WTC11 (cell line): ENCODE measurements at regions of chr14 and their contacts with region 1.

Region 1: DNA sequence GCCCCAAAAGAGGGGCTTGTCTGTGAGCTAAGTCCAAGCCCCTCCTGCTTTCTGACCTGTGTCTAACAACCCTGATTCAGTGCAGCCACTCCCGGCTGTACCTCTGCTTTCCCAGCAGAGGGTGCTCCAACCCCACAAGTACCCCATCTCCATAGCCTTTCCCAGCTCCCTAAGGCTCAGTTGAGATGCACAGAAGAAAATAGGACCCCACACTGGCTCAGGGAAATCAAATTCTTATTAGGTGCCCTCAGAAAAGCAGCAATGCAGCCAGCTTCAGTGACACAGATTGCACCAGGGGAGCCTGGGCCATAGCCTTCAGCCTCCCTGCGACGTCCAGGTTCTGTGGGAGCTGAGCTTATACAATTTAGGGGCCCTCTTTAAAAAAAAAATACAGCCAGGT is 49.9 kb downstream of the LRRC74A start:
- DNase-seq: peak; percentile 76
- ATAC-seq: peak; percentile 95
- H3K4me3 Mint-ChIP-seq: no peak overlapping the region
- H3K27ac Mint-ChIP-seq: no peak overlapping the region
- H3K4me1 Mint-ChIP-seq: peaks cover 5% of the 10 kb centered on the region
- H3K27me3 Mint-ChIP-seq: peaks cover 4% of the 10 kb centered on the region; the same call in 1 of the 2 replicates
- CTCF ChIP-seq: peak; percentile 86

Region 2: GRCh38 chr14:76584271-76584702 is 291.8 kb before region 1 on chr14:
- CTCF ChIA-PET with region 1: no interaction called
- POLR2A ChIA-PET with region 1: no interaction called
- DNase-seq: no peak
- ATAC-seq: no peak
- H3K4me3 Mint-ChIP-seq: no peak overlapping the region
- H3K27ac Mint-ChIP-seq: peak overlapping the region; percentile 25; the same call in 1 of the 2 replicates
- H3K4me1 Mint-ChIP-seq: no peaks in the 10 kb centered on the region
- H3K27me3 Mint-ChIP-seq: no peaks in the 10 kb centered on the region
- CTCF ChIP-seq: no peak

Region 3: DNA sequence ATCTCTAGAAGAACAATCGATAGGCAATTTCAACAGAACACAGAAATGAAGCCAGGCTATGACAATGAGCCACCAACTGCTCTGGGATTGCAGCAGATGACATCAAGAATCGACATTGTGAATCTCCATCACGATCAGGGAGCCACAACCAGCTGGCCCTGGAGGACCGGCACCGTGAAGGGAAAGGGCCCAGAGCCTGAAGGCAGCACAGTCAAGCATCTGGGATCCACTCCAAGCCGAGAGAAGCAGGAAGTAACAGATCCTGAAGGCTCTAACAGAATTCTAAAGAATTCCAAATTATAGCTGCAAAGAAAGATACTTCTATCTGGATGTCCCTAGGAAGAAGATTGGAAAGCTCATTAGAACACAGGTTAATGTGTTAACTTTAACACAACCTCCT is 11.1 kb after region 1 on chr14:
- CTCF ChIA-PET with region 1: interaction called, 22 read pairs
- POLR2A ChIA-PET with region 1: no interaction called
- DNase-seq: no peak
- ATAC-seq: no peak
- H3K4me3 Mint-ChIP-seq: no peak overlapping the region
- H3K27ac Mint-ChIP-seq: no peak overlapping the region
- H3K4me1 Mint-ChIP-seq: peaks cover 20% of the 10 kb centered on the region
- H3K27me3 Mint-ChIP-seq: no peaks in the 10 kb centered on the region; the same call in 1 of the 2 replicates
- CTCF ChIP-seq: no peak

Region 4: GRCh38 chr14:76918751-76919543 is 42.9 kb after region 1 on chr14:
- CTCF ChIA-PET with region 1: interaction called, 196 read pairs
- POLR2A ChIA-PET with region 1: no interaction called
- DNase-seq: peak; percentile 53
- ATAC-seq: peak; percentile 33
- H3K4me3 Mint-ChIP-seq: no peak overlapping the region; the same call in 1 of the 2 replicates
- H3K27ac Mint-ChIP-seq: peak overlapping the region; percentile 85
- H3K4me1 Mint-ChIP-seq: peaks cover 81% of the 10 kb centered on the region
- H3K27me3 Mint-ChIP-seq: no peaks in the 10 kb centered on the region
- CTCF ChIP-seq: no peak

Region 5: GRCh38 chr14:76977793-76978720 is 102.0 kb after region 1 on chr14:
- CTCF ChIA-PET with region 1: no interaction called
- POLR2A ChIA-PET with region 1: no interaction called
- DNase-seq: no peak
- ATAC-seq: peak; percentile 31
- H3K4me3 Mint-ChIP-seq: no peak overlapping the region
- H3K27ac Mint-ChIP-seq: no peak overlapping the region
- H3K4me1 Mint-ChIP-seq: peaks cover 19% of the 10 kb centered on the region
- H3K27me3 Mint-ChIP-seq: no peaks in the 10 kb centered on the region
- CTCF ChIP-seq: no peak

Region 6: GRCh38 chr14:77023001-77023996 is 147.2 kb after region 1 on chr14:
- CTCF ChIA-PET with region 1: interaction called, 13 read pairs
- POLR2A ChIA-PET with region 1: no interaction called
- DNase-seq: peak; percentile 44
- ATAC-seq: peak; percentile 40
- H3K4me3 Mint-ChIP-seq: peak overlapping the region; percentile 49
- H3K27ac Mint-ChIP-seq: peak overlapping the region; percentile 99
- H3K4me1 Mint-ChIP-seq: peaks cover 32% of the 10 kb centered on the region
- H3K27me3 Mint-ChIP-seq: peaks cover 2% of the 10 kb centered on the region; the same call in 1 of the 2 replicates
- CTCF ChIP-seq: no peak

Region 7: DNA sequence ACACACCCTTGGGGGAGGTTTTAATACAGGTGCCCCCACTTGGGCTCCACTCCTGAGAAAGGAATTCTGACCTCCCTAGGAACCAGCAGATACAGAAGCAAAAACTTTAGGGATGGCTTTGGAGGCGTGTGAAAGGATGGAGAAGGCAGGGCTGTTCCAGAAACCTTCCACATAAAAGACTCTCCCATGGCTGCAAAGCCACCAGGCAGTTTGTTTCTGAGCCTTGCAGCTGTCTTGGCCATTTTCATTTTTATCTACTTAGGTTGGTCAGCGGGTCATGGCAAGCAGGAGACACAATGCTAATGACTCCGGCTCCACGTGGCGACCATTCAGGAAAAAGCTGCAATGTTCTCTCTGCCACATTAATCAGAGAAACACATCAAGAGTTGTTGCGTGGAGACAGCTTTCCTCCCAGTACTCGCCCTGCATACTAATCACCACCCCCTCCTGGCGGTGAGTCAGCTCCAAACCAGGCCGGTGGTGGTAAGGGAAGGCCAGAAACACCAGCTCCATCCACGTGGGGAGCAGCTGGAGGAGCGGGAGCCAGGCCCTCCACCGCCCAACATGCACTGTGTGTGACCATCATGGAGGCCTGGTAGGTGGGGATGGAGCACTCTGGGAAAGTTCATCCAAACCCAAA is 183.3 kb after region 1 on chr14:
- CTCF ChIA-PET with region 1: interaction called, 249 read pairs
- POLR2A ChIA-PET with region 1: no interaction called
- DNase-seq: peak; percentile 61
- ATAC-seq: peak; percentile 90
- H3K4me3 Mint-ChIP-seq: no peak overlapping the region
- H3K27ac Mint-ChIP-seq: no peak overlapping the region
- H3K4me1 Mint-ChIP-seq: peaks cover 22% of the 10 kb centered on the region
- H3K27me3 Mint-ChIP-seq: no peaks in the 10 kb centered on the region
- CTCF ChIP-seq: no peak

Region 8: GRCh38 chr14:77086017-77086736 is 210.1 kb after region 1 on chr14:
- CTCF ChIA-PET with region 1: interaction called, 25 read pairs
- POLR2A ChIA-PET with region 1: interaction called, 3 read pairs
- DNase-seq: no peak
- ATAC-seq: peak; percentile 23; the same call in 1 of the 2 replicates
- H3K4me3 Mint-ChIP-seq: no peak overlapping the region
- H3K27ac Mint-ChIP-seq: peak overlapping the region; percentile 97
- H3K4me1 Mint-ChIP-seq: peaks cover 49% of the 10 kb centered on the region
- H3K27me3 Mint-ChIP-seq: no peaks in the 10 kb centered on the region; the same call in none of the 2 replicates
- CTCF ChIP-seq: no peak

Region 9: DNA sequence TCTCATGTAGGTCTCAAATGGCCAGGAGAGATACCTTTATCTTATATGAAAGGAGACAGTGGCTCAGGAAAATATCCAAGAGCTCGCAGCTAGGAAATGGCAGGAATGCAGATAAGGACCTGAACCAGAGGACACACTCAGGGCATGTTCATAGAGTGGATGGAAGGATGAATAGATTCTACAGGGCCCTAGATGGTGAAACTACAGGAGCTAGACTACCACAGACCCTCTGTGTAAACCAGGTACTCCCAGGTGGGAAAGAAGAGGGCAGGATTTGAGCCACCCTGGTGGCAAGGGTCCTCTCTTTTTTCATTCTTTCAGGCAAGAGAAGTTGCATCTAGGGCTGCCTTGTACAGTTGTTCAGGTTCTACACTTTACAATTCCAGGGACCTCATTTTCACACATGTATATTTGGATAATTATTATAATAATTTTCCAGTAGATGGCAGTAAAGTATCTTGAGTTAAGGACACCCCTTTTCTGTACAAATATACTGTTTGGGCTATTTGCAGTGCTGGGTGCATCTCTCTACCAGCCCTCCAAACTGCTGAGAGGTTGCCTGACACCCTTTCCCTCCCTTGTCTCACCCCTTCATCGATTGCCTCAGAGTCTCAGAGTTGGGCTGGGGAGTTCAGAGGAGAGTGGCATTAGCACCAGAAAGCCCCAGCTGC is 276.0 kb after region 1 on chr14:
- CTCF ChIA-PET with region 1: interaction called, 29 read pairs
- POLR2A ChIA-PET with region 1: interaction called, 3 read pairs
- DNase-seq: no peak
- ATAC-seq: no peak
- H3K4me3 Mint-ChIP-seq: no peak overlapping the region
- H3K27ac Mint-ChIP-seq: no peak overlapping the region
- H3K4me1 Mint-ChIP-seq: peaks cover 34% of the 10 kb centered on the region
- H3K27me3 Mint-ChIP-seq: no peaks in the 10 kb centered on the region
- CTCF ChIP-seq: no peak

Region 10: GRCh38 chr14:77186911-77187648 is 311.0 kb after region 1 on chr14:
- CTCF ChIA-PET with region 1: no interaction called
- POLR2A ChIA-PET with region 1: no interaction called
- DNase-seq: peak; percentile 35
- ATAC-seq: peak; percentile 60
- H3K4me3 Mint-ChIP-seq: no peak overlapping the region
- H3K27ac Mint-ChIP-seq: peak overlapping the region; percentile 57; the same call in 1 of the 2 replicates
- H3K4me1 Mint-ChIP-seq: peaks cover 9% of the 10 kb centered on the region
- H3K27me3 Mint-ChIP-seq: peaks cover 9% of the 10 kb centered on the region
- CTCF ChIP-seq: no peak

Region 11: GRCh38 chr14:77238356-77238755 is 362.3 kb after region 1 on chr14:
- CTCF ChIA-PET with region 1: no interaction called
- POLR2A ChIA-PET with region 1: no interaction called
- DNase-seq: no peak
- ATAC-seq: no peak
- H3K4me3 Mint-ChIP-seq: no peak overlapping the region
- H3K27ac Mint-ChIP-seq: no peak overlapping the region
- H3K4me1 Mint-ChIP-seq: no peaks in the 10 kb centered on the region
- H3K27me3 Mint-ChIP-seq: no peaks in the 10 kb centered on the region
- CTCF ChIP-seq: no peak